ENCODE measurements at regions of chr5 and their contacts with region 1.

Region 1: DNA sequence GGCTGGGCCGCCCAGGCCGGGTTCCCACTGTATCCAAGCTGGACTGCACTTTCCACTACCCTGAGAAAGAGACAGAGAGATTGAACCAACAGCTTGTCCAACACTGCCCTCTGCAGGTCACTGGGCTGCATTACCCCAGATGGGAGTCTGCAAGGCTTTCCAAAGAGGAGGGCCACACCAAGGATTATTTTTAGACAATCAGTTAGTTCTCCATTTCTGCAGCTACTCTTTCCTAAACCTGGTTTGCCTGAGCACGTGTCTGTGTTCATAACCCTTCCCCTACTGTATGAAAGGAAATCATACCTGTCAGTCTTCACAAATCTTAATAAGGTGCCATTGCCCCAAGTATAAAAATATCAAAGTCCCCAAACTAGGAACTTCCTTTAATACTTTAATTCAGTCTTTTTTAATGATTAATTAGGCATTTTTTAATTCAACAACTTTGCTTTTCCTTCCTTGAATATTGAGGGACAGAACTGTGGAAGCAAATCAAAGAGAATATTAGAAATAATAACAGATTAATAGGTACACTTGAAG is 13.4 kb upstream of the FGF1 start:
- DNase-seq: peak; percentile 76 to 78
- ATAC-seq: peak; percentile 96 to 98
- H3K4me3 ChIP-seq: no peak overlapping the region
- H3K27ac ChIP-seq: no peak overlapping the region
- H3K4me1 ChIP-seq: 0 out of 3 replicates have a peak, but pooled peaks cover 4% of the 10 kb centered on the region
- CTCF ChIP-seq: peak; percentile 97
- EP300 ChIP-seq: no peak
- POLR2A ChIP-seq: no peak
- RAD21 ChIP-seq: peak; percentile 99 to 100

Region 2: GRCh38 chr5:142548739-142549275 is 150.4 kb before region 1 on chr5:
- CTCF ChIA-PET with region 1: interaction called, 14 read pairs
- POLR2A ChIA-PET with region 1: no interaction called
- DNase-seq: peak; percentile 79 to 93
- ATAC-seq: peak; percentile 98 to 100
- H3K4me3 ChIP-seq: no peak overlapping the region
- H3K27ac ChIP-seq: no peak overlapping the region; a peak in 1 of 6 replicates
- H3K4me1 ChIP-seq: peaks cover 2% of the 10 kb centered on the region; the same call in 1 of the 3 replicates
- CTCF ChIP-seq: peak; percentile 98
- EP300 ChIP-seq: no peak
- POLR2A ChIP-seq: no peak
- RAD21 ChIP-seq: peak; percentile 98 to 99

Region 3: DNA sequence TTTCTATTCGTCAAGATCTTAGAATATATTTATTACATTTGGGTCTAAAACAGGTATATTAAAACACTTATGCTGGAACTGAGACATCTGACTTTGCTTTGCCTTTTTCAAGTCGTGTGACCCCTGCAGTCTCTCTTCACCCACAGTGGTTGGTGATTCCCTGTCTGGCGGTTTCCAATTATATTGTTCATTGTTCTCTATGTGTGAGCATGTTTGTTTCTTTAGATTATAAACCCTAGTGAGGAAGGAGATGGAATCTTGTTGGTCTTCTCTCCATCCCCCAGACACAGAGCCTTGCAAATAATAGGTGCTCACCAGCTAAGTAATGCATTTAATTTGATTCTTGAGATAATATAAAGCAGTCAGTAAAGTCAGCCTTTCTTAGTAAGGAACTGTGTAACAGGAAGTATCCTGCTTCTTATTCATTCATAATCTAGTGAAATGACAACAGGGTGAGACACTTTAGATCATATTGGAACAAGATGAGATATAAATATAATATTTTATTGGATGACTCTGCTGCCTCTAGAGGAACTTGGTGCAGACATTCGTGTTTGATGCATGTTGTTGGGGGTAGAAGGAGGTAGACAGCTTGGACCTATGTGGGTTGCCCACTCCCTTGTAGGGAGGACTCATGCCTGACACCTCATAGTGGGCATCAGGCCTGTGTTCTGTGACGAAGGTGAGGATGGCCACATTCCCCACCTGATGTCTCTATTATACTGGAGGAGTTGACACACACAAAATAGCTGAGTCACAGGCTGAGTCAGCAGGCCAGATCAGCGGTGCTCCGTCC is 101.5 kb before region 1 on chr5:
- CTCF ChIA-PET with region 1: interaction called, 23 read pairs
- POLR2A ChIA-PET with region 1: no interaction called
- DNase-seq: peak; percentile 50 to 85
- ATAC-seq: peak; percentile 83 to 85
- H3K4me3 ChIP-seq: no peak overlapping the region
- H3K27ac ChIP-seq: peak overlapping the region; percentile 83 to 85
- H3K4me1 ChIP-seq: peaks cover 51% of the 10 kb centered on the region
- CTCF ChIP-seq: peak; percentile 20; the same call in 1 of the 3 replicates
- EP300 ChIP-seq: no peak
- POLR2A ChIP-seq: no peak
- RAD21 ChIP-seq: no peak

Region 4: DNA sequence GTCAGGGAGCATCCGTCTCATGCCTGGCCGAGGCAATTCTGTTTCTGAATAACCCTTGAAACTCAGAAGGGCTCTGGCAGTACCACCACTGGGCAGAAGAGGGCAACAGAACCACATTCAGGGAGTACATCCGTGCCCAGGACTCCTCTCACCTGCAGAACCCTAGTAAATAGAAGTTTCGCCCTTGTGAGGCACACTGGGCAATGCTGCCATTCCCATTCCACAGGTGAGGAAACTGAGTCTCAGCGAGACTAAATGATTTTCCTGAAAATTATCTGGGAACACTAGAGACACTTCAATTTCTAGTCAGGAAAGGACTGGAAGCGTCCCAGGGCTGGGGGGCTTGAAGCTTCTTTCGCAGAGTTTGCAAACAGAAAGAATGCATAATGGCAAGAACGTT is 88.1 kb before region 1 on chr5:
- CTCF ChIA-PET with region 1: interaction called, 212 read pairs
- POLR2A ChIA-PET with region 1: no interaction called
- DNase-seq: peak; percentile 68 to 69
- ATAC-seq: peak; percentile 93 to 98
- H3K4me3 ChIP-seq: no peak overlapping the region
- H3K27ac ChIP-seq: no peak overlapping the region
- H3K4me1 ChIP-seq: 0 out of 3 replicates have a peak, but pooled peaks cover 5% of the 10 kb centered on the region
- CTCF ChIP-seq: peak; percentile 93
- EP300 ChIP-seq: no peak
- POLR2A ChIP-seq: no peak
- RAD21 ChIP-seq: peak; percentile 95 to 96

Region 5: DNA sequence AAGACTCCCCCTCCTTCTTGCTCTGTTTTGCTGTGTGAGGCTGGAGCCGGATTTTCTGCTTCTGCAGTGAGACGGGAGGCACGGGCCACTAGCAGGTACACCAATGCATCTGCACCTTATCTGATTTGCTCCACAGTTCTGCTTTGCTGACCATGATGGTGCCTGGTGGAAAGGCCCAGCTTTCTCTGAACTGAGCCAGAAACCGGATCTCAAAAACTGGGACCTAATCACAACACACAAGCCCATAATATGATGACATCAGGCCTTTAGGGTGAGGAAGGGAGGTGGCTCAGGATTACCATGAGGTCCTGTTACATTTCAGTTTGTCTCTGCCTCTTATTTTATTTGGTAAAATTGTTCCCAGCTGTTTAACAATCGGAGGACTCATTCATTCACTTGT is 63.2 kb before region 1 on chr5:
- CTCF ChIA-PET with region 1: interaction called, 13 read pairs
- POLR2A ChIA-PET with region 1: no interaction called
- DNase-seq: no peak
- ATAC-seq: no peak
- H3K4me3 ChIP-seq: no peak overlapping the region
- H3K27ac ChIP-seq: no peak overlapping the region
- H3K4me1 ChIP-seq: no peaks in the 10 kb centered on the region
- CTCF ChIP-seq: no peak
- EP300 ChIP-seq: no peak
- POLR2A ChIP-seq: no peak
- RAD21 ChIP-seq: no peak

Region 6: DNA sequence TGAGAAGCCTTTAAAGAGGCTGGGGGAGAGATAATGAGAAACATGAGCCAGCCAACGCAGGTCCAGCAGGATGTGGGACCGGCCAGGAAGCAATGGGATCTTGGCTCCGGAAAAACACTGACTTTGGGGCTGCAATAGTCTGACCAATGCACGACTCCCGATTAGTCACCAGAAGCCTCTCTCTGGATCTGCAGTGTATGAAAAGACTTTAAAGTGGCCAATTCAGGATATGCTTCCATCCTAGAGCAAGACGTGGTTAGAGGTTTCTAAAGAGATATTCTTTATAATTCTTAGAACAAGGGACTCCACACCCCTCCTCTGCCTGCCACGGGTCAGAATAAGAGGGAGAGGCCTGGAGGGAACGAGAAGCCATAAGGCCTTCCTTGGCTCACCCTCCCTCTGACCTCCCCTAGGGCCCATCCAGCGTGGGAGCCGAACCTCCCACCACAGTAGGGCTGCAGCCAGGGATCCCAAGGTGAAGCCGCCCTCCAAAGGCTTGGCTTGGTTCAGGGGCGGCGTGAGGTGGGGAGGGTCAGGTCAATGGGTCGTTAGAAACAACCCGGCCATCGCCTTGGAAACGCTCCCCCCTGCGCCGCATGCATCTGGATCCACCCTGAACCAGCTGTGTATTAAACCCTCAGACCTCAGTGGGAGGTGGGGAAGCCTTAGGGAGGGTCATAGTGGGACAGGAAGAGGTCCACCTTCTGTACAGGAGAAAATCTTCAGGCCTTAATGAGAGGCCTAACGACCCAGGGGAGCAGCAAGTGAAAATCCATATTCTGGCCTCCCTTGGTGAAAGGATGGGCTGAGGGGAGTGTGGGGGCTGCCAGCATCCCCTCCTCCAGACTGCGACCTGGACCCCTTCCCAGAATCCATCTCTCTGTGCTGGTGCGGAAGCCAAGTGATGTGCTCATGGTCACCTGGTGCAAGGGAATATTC is 24.5 kb before region 1 on chr5:
- CTCF ChIA-PET with region 1: interaction called, 42 read pairs
- POLR2A ChIA-PET with region 1: no interaction called
- DNase-seq: no peak
- ATAC-seq: no peak
- H3K4me3 ChIP-seq: no peak overlapping the region
- H3K27ac ChIP-seq: no peak overlapping the region
- H3K4me1 ChIP-seq: peaks cover 10% of the 10 kb centered on the region; the same call in 2 of the 3 replicates
- CTCF ChIP-seq: no peak
- EP300 ChIP-seq: no peak
- POLR2A ChIP-seq: no peak
- RAD21 ChIP-seq: no peak

Region 7: GRCh38 chr5:142881076-142881783 is 182.0 kb after region 1 on chr5:
- CTCF ChIA-PET with region 1: interaction called, 1,307 read pairs
- POLR2A ChIA-PET with region 1: no interaction called
- DNase-seq: no peak
- ATAC-seq: peak in 1 of 2 experiments; percentile 45; a peak in 2 of 6 replicates
- H3K4me3 ChIP-seq: no peak overlapping the region
- H3K27ac ChIP-seq: no peak overlapping the region
- H3K4me1 ChIP-seq: peaks cover 29% of the 10 kb centered on the region
- CTCF ChIP-seq: no peak
- EP300 ChIP-seq: no peak
- POLR2A ChIP-seq: no peak
- RAD21 ChIP-seq: no peak

Measured in A549 (cell line).